HCT116 (cell line): ENCODE measurements at regions of chr5 and their contacts with region 1.

Region 1: GRCh38 chr5:36305571-36306326 is 4.0 kb upstream of the RANBP3L start:
- DNase-seq: peak; percentile 21
- ATAC-seq: peak; percentile 98
- H3K4me3 ChIP-seq: no peak overlapping the region
- H3K27ac ChIP-seq: no peak overlapping the region
- H3K4me1 ChIP-seq: no peaks in the 10 kb centered on the region
- H3K27me3 ChIP-seq: peaks cover 4% of the 10 kb centered on the region; the same call in 1 of the 2 replicates
- CTCF ChIP-seq: peak; percentile 61 to 80 (median 76)
- POLR2A ChIP-seq: no peak
- RAD21 ChIP-seq: peak; percentile 82

Region 2: DNA sequence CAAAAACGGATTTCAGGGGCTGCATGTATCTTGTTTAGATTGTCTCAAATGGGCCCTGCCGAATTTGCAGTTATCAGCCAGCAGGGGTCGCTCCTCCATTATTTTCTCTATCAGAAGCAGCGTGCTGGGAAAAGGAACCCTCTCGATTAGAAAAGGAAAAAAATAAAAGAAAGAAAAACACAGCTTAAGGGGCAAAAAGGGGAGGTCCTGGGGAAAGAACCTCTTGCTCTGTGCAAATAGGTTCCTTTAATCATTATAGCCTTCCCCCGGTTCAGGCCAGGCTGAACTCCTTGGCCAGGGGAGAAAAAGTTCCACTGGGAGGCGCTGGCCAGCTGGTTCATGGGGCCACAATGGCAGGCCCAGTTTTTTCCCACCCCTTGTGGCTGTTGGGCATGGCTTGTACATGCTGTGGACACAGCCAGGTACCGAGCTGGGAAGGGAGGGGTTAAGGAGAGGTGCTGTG is 342.3 kb before region 1 on chr5:
- CTCF ChIA-PET with region 1: no interaction called
- POLR2A ChIA-PET with region 1: no interaction called
- RAD21 ChIA-PET with region 1: no interaction called
- intact Hi-C with region 1: loop called (anchors 10 kb)
- DNase-seq: no peak
- ATAC-seq: peak; percentile 84
- H3K4me3 ChIP-seq: no peak overlapping the region
- H3K27ac ChIP-seq: no peak overlapping the region
- H3K4me1 ChIP-seq: no peaks in the 10 kb centered on the region
- H3K27me3 ChIP-seq: peaks cover 23% of the 10 kb centered on the region
- CTCF ChIP-seq: peak; percentile 62 to 88 (median 75)
- POLR2A ChIP-seq: no peak
- RAD21 ChIP-seq: peak; percentile 53

Region 3: DNA sequence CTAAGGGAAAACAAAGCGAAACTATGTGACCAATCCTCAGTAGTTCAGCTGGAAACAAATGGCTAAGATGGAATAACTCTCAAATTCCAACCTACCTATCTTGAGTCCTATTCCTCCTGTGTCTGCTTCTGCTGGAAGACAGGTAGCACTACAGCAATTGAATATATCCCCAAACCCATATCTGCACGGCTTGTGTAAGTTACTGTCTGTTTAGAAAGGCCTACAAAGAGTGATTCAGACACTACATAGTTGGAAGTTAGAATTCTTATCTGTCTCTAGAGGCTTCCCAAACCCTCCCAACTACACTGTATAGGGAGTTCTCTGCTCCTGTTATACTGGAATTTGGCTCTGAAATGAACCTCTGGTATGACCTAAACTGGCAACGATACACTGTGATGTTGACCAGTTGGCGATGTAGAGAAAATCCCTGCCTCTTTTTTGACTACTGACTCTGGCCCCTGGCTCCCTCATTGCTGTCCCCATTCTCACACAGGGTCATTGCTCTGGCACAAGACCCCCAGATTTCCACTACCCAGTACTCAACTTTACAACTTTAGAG is 41.5 kb before region 1 on chr5:
- CTCF ChIA-PET with region 1: interaction called, 4 read pairs
- POLR2A ChIA-PET with region 1: no interaction called
- RAD21 ChIA-PET with region 1: no interaction called
- intact Hi-C with region 1: loop called (anchors 1 kb)
- DNase-seq: no peak
- ATAC-seq: no peak
- H3K4me3 ChIP-seq: no peak overlapping the region
- H3K27ac ChIP-seq: no peak overlapping the region
- H3K4me1 ChIP-seq: no peaks in the 10 kb centered on the region
- H3K27me3 ChIP-seq: no peaks in the 10 kb centered on the region
- CTCF ChIP-seq: no peak
- POLR2A ChIP-seq: no peak
- RAD21 ChIP-seq: no peak

Region 4: DNA sequence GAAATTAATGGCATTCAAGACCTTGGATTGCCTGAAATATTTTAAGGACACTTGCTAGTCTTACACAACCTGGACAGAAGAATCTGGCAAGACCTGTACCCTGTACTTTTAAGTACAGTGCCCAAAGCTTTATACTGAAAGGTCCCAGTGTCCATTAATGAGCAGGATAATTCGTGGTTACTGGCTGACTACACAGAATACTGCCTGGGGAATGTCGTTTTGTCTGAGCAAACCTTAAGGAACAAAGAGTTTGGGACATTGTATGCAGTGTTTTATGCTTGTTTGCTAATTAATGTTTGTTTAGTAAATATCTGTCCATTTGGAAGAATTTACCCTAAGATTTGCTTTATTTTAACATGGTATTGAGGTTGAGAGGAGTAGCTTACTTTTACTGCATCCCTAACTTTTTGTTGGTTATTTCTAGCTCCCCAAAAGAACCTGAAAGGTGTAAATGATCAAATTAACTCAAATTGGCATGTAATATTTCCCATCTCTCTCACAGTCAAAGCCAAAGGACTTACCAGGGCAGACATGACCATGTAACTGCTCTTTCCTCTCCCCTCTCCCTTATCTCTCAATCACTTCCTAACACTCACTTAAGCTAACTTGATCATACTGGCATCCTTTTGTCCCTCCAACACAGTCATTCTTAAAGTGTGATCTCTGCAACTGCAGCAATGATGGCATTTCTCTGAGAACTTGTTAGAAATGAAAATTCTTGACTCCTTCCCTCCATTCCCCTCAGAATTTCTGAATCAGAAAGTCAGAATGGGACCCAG is 19.7 kb before region 1 on chr5:
- CTCF ChIA-PET with region 1: no interaction called
- POLR2A ChIA-PET with region 1: no interaction called
- RAD21 ChIA-PET with region 1: no interaction called
- intact Hi-C with region 1: no loop called
- DNase-seq: no peak
- ATAC-seq: no peak
- H3K4me3 ChIP-seq: no peak overlapping the region
- H3K27ac ChIP-seq: no peak overlapping the region
- H3K4me1 ChIP-seq: no peaks in the 10 kb centered on the region
- H3K27me3 ChIP-seq: no peaks in the 10 kb centered on the region
- CTCF ChIP-seq: no peak
- POLR2A ChIP-seq: no peak
- RAD21 ChIP-seq: no peak